CD4-positive, alpha-beta memory T cell (primary cell): ENCODE measurements at regions of chr2 and their contacts with region 1.

Region 1: DNA sequence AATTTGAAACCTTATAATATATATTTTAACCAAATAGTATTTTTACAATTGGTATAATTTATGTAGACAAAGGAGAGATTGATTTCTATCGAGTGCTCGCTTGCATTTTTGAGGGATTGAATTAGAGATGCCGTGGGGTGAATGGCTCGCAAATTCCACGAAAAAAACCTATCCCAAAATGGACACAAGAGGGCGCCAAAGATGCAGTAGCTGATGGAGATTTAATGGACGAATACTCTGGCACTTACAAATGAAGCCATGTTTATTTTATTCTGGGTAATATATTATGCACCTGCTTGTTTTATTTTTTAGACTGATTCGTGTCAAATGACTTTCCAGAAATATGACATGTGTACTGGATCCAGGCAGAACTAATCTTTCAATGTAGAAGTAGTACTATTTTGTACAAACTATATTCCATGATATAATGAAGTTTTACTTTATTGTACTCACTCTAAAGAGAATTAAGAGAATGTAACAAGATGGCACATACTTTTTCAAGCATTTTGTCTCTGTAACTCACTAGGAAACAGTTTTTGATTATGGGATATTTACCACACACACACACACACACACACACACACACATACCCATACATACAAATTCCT is 505.4 kb downstream of the PLCL1 start:
- DNase-seq: peak in 4 of 5 donors; percentile 45 to 58 (median 53)
- H3K4me3 ChIP-seq: no peak overlapping the region
- H3K4me3 Mint-ChIP-seq: no peak overlapping the region
- H3K27ac ChIP-seq: no peak overlapping the region
- H3K27ac Mint-ChIP-seq: no peak overlapping the region
- H3K4me1 ChIP-seq: no peaks in the 10 kb centered on the region
- H3K4me1 Mint-ChIP-seq: peaks cover 0 to 4% (median 0%) of the 10 kb centered on the region in 4 donors
- H3K27me3 ChIP-seq: peaks cover 4% of the 10 kb centered on the region
- H3K27me3 Mint-ChIP-seq: peaks cover 13 to 17% of the 10 kb centered on the region in 2 donors

Region 2: GRCh38 chr2:198322294-198322693 is 12.5 kb after region 1 on chr2:
- CTCF ChIA-PET with region 1: interaction called, 36 read pairs
- POLR2A ChIA-PET with region 1: no interaction called
- intact Hi-C with region 1: no loop called
- DNase-seq: no peak
- H3K4me3 ChIP-seq: no peak overlapping the region
- H3K4me3 Mint-ChIP-seq: no peak overlapping the region
- H3K27ac ChIP-seq: no peak overlapping the region
- H3K27ac Mint-ChIP-seq: no peak overlapping the region
- H3K4me1 ChIP-seq: peaks cover 20% of the 10 kb centered on the region
- H3K4me1 Mint-ChIP-seq: peaks cover 14 to 20% (median 17%) of the 10 kb centered on the region in 4 donors
- H3K27me3 ChIP-seq: peaks cover 9% of the 10 kb centered on the region
- H3K27me3 Mint-ChIP-seq: peaks cover 20 to 30% of the 10 kb centered on the region in 2 donors

Region 3: GRCh38 chr2:198417836-198418235 is 108.1 kb after region 1 on chr2:
- CTCF ChIA-PET with region 1: no interaction called
- POLR2A ChIA-PET with region 1: no interaction called
- intact Hi-C with region 1: no loop called
- DNase-seq: no peak
- H3K4me3 ChIP-seq: no peak overlapping the region
- H3K4me3 Mint-ChIP-seq: no peak overlapping the region
- H3K27ac ChIP-seq: no peak overlapping the region
- H3K27ac Mint-ChIP-seq: peak overlapping the region in 1 of 7 donors; percentile 59
- H3K4me1 ChIP-seq: no peaks in the 10 kb centered on the region
- H3K4me1 Mint-ChIP-seq: no peaks in the 10 kb centered on the region
- H3K27me3 ChIP-seq: no peaks in the 10 kb centered on the region
- H3K27me3 Mint-ChIP-seq: no peaks in the 10 kb centered on the region

Region 4: GRCh38 chr2:198499539-198499938 is 189.8 kb after region 1 on chr2:
- CTCF ChIA-PET with region 1: no interaction called
- POLR2A ChIA-PET with region 1: no interaction called
- intact Hi-C with region 1: no loop called
- DNase-seq: no peak
- H3K4me3 ChIP-seq: no peak overlapping the region
- H3K4me3 Mint-ChIP-seq: no peak overlapping the region
- H3K27ac ChIP-seq: no peak overlapping the region
- H3K27ac Mint-ChIP-seq: no peak overlapping the region
- H3K4me1 ChIP-seq: no peaks in the 10 kb centered on the region
- H3K4me1 Mint-ChIP-seq: no peaks in the 10 kb centered on the region
- H3K27me3 ChIP-seq: no peaks in the 10 kb centered on the region
- H3K27me3 Mint-ChIP-seq: peaks cover 3 to 4% of the 10 kb centered on the region in 2 donors

Region 5: GRCh38 chr2:199488772-199489400 is 1179.1 kb after region 1 on chr2:
- CTCF ChIA-PET with region 1: interaction called, 105 read pairs
- POLR2A ChIA-PET with region 1: interaction called, 3 read pairs
- intact Hi-C with region 1: loop called (anchors 1 kb)
- DNase-seq: peak in 3 of 5 donors; percentile 42 to 48 (median 46)
- H3K4me3 ChIP-seq: no peak overlapping the region
- H3K4me3 Mint-ChIP-seq: no peak overlapping the region
- H3K27ac ChIP-seq: no peak overlapping the region
- H3K27ac Mint-ChIP-seq: no peak overlapping the region
- H3K4me1 ChIP-seq: no peaks in the 10 kb centered on the region
- H3K4me1 Mint-ChIP-seq: peaks cover 0 to 1% (median 0%) of the 10 kb centered on the region in 4 donors
- H3K27me3 ChIP-seq: no peaks in the 10 kb centered on the region
- H3K27me3 Mint-ChIP-seq: peaks cover 17% of the 10 kb centered on the region in 2 donors

Region 6: DNA sequence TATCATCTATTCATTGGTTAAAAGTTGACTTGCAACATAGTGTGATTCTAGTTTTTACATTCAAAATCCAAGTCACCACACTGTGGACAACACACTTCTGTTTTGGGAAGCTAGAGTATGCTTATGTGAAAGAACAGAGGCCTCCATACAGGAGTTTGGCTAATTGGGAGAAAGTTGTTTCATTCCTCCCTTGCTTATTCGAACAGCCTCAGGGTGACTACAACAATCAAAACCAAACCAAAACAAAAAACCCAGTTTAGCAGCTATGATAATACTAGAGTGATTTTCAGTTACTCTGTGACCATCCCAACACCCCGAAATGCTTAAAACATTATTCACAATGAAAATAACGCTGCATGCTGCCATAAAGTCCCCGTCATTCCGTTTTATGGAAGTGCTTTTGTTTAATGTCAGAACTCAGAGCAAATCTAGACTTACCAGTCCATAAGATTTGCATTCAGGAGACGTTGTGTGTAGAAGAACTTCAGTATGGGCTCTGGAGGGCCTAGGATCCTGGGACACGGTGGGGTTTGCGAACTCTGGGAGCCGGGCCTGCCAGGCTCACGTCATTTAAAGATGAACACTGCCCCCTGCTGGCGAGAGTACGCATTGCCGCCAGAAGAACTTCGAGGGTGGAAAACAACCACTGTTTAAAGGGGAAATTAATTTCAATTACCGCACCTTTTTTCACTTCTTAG is 1429.8 kb after region 1 on chr2:
- CTCF ChIA-PET with region 1: interaction called, 89 read pairs
- POLR2A ChIA-PET with region 1: no interaction called
- intact Hi-C with region 1: loop called (anchors 1 kb)
- DNase-seq: peak; percentile 24 to 57 (median 26)
- H3K4me3 ChIP-seq: no peak overlapping the region
- H3K4me3 Mint-ChIP-seq: peak overlapping the region in 1 of 8 donors; percentile 25
- H3K27ac ChIP-seq: no peak overlapping the region
- H3K27ac Mint-ChIP-seq: peak overlapping the region in 1 of 7 donors; percentile 57
- H3K4me1 ChIP-seq: peaks cover 8% of the 10 kb centered on the region
- H3K4me1 Mint-ChIP-seq: peaks cover 3 to 7% (median 5%) of the 10 kb centered on the region in 4 donors
- H3K27me3 ChIP-seq: peaks cover 8% of the 10 kb centered on the region
- H3K27me3 Mint-ChIP-seq: peaks cover 10 to 14% of the 10 kb centered on the region in 2 donors

Region 7: DNA sequence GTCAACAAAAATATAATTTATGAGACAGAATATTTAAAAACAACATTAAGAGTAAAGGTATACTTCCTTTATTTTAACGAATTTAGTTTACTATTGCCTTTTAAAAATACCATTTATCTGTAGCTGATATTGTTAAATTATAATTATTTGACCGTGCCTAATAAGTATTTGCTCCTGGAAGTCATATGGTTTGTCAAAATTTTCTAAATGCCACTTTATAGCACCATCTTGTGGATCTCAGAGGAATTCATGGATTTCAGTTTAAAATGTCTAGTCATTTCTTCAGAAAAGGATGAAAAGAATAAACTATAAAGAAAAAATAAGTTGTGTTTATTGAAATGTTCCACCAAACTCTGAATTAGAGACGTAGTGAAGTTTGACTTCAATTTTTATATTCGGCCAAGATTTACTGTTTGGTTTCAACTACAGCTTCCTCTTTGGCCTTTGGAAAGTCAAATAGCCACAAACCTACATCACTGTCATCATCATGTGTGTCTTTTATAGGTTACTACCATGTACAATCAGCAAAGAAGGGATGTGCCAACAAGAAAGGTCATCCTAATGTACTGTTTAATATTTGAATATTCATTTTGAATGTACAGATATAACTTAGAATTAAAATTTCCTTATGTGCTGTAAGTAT is 1551.5 kb after region 1 on chr2:
- CTCF ChIA-PET with region 1: no interaction called
- POLR2A ChIA-PET with region 1: no interaction called
- intact Hi-C with region 1: loop called (anchors 2 kb)
- DNase-seq: peak in 4 of 5 donors; percentile 5 to 11 (median 6)
- H3K4me3 ChIP-seq: no peak overlapping the region
- H3K4me3 Mint-ChIP-seq: no peak overlapping the region
- H3K27ac ChIP-seq: no peak overlapping the region
- H3K27ac Mint-ChIP-seq: no peak overlapping the region
- H3K4me1 ChIP-seq: no peaks in the 10 kb centered on the region
- H3K4me1 Mint-ChIP-seq: peaks cover 0 to 1% (median 0%) of the 10 kb centered on the region in 4 donors
- H3K27me3 ChIP-seq: peaks cover 4% of the 10 kb centered on the region
- H3K27me3 Mint-ChIP-seq: peaks cover 13 to 20% of the 10 kb centered on the region in 2 donors